Endothelial cell of umbilical vein (primary cell): ENCODE measurements at regions of chr6 and their contacts with region 1.

Region 1: DNA sequence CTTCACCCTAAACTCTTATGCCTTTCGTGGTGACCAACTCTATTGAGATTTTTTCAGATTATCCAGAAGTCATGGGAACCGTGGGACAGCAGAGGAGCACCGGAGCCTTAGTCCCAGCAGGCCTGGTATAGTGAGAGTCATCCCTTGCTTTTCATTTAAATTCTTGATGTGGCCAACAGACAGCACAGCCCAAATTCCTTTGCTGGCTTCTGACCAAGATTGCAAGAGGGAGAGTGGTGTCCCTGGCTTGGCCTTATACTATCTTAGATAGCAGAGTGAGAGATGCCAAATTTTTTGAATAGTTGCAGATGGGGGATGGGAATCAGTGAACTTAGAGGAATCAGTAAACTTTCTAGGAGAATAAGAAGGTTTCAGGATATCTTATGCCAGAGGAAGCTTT is 7.8 kb downstream of the STX11 start:
- DNase-seq: peak; percentile 79
- H3K4me3 ChIP-seq: no peak overlapping the region
- H3K27ac ChIP-seq: peak overlapping the region; percentile 93
- H3K4me1 ChIP-seq: peaks cover 32% of the 10 kb centered on the region
- H3K27me3 ChIP-seq: no peaks in the 10 kb centered on the region
- CTCF ChIP-seq: no peak
- POLR2A ChIP-seq: no peak

Region 2: DNA sequence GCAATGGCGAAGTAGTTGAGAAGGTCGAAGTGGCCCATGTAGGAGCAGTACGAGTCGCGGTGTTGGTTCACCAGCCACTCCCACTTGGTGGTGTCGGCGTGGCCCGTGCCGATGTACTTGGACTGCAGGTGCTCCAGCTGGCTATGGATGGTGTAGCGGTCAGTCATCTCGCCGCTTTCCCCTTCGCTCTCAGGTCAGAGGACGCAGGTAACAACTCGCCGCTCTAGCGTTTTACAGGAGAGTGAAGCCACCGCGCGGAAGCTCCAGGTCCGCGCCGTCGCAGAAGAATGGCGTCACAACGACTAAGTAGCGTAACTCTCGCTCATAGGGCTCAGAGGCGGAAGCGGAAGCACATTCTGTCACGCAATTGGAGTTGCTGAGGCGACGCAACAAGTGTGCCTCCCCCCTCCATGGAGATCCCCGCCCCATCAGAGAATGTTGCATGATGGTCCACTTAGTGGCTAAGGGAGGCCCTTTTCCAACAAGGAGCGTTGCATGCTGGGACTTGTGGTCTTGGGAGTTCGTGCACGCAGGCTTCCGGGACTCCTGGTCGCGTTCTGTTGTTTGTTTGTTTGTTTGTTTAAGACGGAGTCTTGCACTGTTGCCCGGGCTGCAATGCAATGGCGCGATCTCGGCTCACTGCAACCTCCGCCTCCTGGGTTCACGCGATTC is 62.7 kb before region 1 on chr6 and contains the start of gene SF3B5:
- CTCF ChIA-PET with region 1: no interaction called
- POLR2A ChIA-PET with region 1: no interaction called
- dilution Hi-C with region 1: no loop called
- intact Hi-C with region 1: no loop called
- DNase-seq: peak; percentile 100
- H3K4me3 ChIP-seq: peak within 1 kb of the TSS; percentile 44 to 74 (median 67)
- H3K27ac ChIP-seq: peak within 1 kb of the TSS; percentile 30
- H3K4me1 ChIP-seq: peaks cover 13% of the 10 kb centered on the region
- H3K27me3 ChIP-seq: peaks cover 0 to 9% of the 10 kb centered on the region in 2 experiments
- CTCF ChIP-seq: no peak
- POLR2A ChIP-seq: peak; percentile 92
- total RNA-seq, gene SF3B5: 170 and 185 TPM in 2 replicates

Region 3: DNA sequence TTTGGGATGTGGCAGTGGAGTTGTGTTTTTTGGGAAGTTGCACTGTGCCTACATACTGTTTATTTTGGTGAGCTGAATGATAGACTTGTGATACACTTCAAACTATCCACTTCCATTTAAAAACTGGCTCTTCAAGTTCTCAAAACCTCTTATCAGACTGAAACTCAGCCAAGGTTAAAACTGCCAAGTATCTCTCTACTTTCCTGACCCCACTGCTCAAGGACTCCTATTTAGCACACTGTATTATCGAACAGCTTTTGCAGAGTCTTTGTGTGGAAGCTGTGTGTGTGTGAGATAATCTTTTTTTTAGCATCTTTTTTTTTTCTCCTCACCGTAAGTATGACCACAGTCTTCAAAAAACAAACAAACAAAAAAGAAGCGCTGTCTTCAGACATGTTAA is 13.3 kb after region 1 on chr6:
- CTCF ChIA-PET with region 1: interaction called, 6 read pairs
- POLR2A ChIA-PET with region 1: no interaction called
- dilution Hi-C with region 1: no loop called
- intact Hi-C with region 1: loop called (anchors 1 kb)
- DNase-seq: no peak
- H3K4me3 ChIP-seq: no peak overlapping the region
- H3K27ac ChIP-seq: no peak overlapping the region
- H3K4me1 ChIP-seq: no peaks in the 10 kb centered on the region
- H3K27me3 ChIP-seq: no peaks in the 10 kb centered on the region
- CTCF ChIP-seq: no peak
- POLR2A ChIP-seq: no peak

Region 4: DNA sequence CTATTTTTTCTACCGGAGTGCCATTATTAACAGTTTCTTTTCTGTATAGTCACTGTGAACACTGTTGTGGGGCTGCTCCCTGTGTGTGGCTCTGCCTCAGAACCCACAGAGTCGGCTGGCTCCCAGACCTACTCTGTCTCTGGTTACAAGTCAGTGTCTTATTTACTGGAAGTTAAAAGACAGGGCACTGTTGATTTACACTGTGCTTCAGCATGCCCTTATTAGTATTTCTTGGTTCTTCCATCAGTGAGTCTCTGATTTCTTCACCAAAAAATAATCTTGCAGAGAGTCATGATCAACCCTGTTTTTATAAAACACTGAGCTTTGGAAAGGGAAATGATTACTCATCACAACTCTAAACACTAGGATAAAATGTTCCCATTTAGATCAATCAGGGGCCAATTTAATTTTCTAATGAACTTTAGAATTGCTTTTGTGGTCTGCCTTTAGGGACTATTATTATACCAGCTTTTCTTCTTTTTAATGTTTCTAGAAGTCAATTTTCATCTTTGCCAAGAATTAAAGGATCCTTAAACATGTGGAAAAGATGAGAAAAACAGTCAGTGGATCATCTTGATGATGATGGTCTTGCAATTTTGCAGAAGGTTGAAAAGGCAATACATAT is 219.6 kb after region 1 on chr6:
- CTCF ChIA-PET with region 1: no interaction called
- POLR2A ChIA-PET with region 1: no interaction called
- dilution Hi-C with region 1: no loop called
- intact Hi-C with region 1: no loop called
- DNase-seq: peak; percentile 67
- H3K4me3 ChIP-seq: peak overlapping the region in 1 of 3 experiments; percentile 14
- H3K27ac ChIP-seq: peak overlapping the region; percentile 68
- H3K4me1 ChIP-seq: peaks cover 32% of the 10 kb centered on the region
- H3K27me3 ChIP-seq: no peaks in the 10 kb centered on the region
- CTCF ChIP-seq: no peak
- POLR2A ChIP-seq: no peak